ENCODE measurements at regions of chr16 and their contacts with region 1.

Region 1: GRCh38 chr16:88405216-88406060 is 22.7 kb downstream of the ZNF469 start:
- DNase-seq: no peak
- H3K4me3 ChIP-seq: no peak overlapping the region
- CTCF ChIP-seq: no peak

Region 2: GRCh38 chr16:88274847-88275246 is 130.6 kb before region 1 on chr16:
- in situ Hi-C with region 1: no loop called
- DNase-seq: no peak
- H3K4me3 ChIP-seq: no peak overlapping the region
- CTCF ChIP-seq: no peak

Region 3: GRCh38 chr16:88363239-88363891 is 42.1 kb before region 1 on chr16:
- in situ Hi-C with region 1: loop called (anchors 5 kb)
- DNase-seq: no peak
- H3K4me3 ChIP-seq: no peak overlapping the region
- CTCF ChIP-seq: no peak

Region 4: DNA sequence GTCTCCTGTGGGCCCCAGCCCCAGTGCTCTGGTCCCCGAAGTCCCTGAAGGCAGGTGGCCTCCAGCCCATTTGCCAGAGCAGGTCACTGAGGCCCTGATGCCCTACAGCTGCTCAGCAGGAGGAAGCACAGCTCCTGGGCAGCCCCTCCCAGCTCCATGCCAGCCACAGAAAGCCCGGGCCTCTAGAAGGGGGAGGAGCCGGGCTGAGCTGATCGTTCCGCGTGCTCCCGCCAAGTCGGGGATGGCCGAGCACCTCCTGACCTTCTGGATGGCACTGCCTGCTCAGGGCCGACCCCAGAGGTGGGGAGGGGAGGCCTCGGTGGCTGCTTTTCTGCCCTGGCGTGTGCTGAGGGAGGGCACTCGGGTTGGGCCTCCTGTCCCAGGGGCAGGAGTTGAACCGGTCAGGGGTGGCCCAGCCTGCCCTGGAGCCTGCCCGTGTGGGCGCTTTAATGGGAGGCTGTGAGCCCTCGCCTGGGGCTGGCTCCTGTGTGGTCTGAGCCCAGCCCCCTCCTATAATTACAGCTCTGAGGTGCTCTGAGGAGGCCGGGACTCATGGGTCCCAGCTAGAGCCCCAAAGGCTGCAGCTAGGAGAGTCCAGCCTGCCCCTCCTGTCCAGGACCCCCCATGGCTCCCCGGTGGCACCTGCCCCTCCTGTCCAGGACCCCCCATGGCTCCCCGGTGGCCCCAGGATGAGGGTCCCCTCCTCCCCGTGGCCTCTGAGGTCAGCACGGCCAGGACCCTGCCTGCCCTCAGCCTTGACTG is 77.4 kb after region 1 on chr16:
- in situ Hi-C with region 1: no loop called
- DNase-seq: no peak
- H3K4me3 ChIP-seq: no peak overlapping the region
- CTCF ChIP-seq: no peak